ENCODE measurements at regions of chr21 and their contacts with region 1.

Region 1: GRCh38 chr21:32666258-32666657 is 54.1 kb upstream of the CFAP298 start:
- DNase-seq: no peak
- ATAC-seq: no peak
- H3K4me3 ChIP-seq: no peak overlapping the region
- H3K27ac ChIP-seq: no peak overlapping the region
- H3K4me1 ChIP-seq: peaks cover 5% of the 10 kb centered on the region
- H3K27me3 ChIP-seq: no peaks in the 10 kb centered on the region
- CTCF ChIP-seq: no peak

Region 2: GRCh38 chr21:32545948-32546441 is 120.3 kb before region 1 on chr21:
- CTCF ChIA-PET with region 1: no interaction called
- POLR2A ChIA-PET with region 1: no interaction called
- intact Hi-C with region 1: no loop called
- DNase-seq: peak; percentile 53
- ATAC-seq: peak; percentile 78
- H3K4me3 ChIP-seq: no peak overlapping the region
- H3K27ac ChIP-seq: peak overlapping the region; percentile 50
- H3K4me1 ChIP-seq: peaks cover 12% of the 10 kb centered on the region; the same call in 1 of the 2 replicates
- H3K27me3 ChIP-seq: no peaks in the 10 kb centered on the region
- CTCF ChIP-seq: no peak

Region 3: GRCh38 chr21:32702702-32703101 is 36.4 kb after region 1 on chr21:
- CTCF ChIA-PET with region 1: no interaction called
- POLR2A ChIA-PET with region 1: interaction called, 14 read pairs
- intact Hi-C with region 1: no loop called
- DNase-seq: peak; percentile 53
- ATAC-seq: peak; percentile 92
- H3K4me3 ChIP-seq: no peak overlapping the region
- H3K27ac ChIP-seq: peak overlapping the region; percentile 2; the same call in 1 of the 2 replicates
- H3K4me1 ChIP-seq: peaks cover 11% of the 10 kb centered on the region; the same call in 1 of the 2 replicates
- H3K27me3 ChIP-seq: no peaks in the 10 kb centered on the region
- CTCF ChIP-seq: no peak

Measured in PC-3 (cell line).